Astrocyte of the cerebellum (primary cell): ENCODE measurements at regions of chr7 and their contacts with region 1.

Region 1: GRCh38 chr7:94405506-94405905 is 10.8 kb downstream of the COL1A2 start:
- DNase-seq: no peak
- H3K4me3 ChIP-seq: no peak overlapping the region
- CTCF ChIP-seq: no peak

Region 2: GRCh38 chr7:93958216-93958615 is 447.3 kb before region 1 on chr7:
- in situ Hi-C with region 1: no loop called
- DNase-seq: no peak
- H3K4me3 ChIP-seq: no peak overlapping the region
- CTCF ChIP-seq: no peak

Region 3: GRCh38 chr7:94289071-94289470 is 116.4 kb before region 1 on chr7:
- in situ Hi-C with region 1: loop called (anchors 5 kb)
- DNase-seq: peak; percentile 87
- H3K4me3 ChIP-seq: no peak overlapping the region
- CTCF ChIP-seq: peak; percentile 100

Region 4: DNA sequence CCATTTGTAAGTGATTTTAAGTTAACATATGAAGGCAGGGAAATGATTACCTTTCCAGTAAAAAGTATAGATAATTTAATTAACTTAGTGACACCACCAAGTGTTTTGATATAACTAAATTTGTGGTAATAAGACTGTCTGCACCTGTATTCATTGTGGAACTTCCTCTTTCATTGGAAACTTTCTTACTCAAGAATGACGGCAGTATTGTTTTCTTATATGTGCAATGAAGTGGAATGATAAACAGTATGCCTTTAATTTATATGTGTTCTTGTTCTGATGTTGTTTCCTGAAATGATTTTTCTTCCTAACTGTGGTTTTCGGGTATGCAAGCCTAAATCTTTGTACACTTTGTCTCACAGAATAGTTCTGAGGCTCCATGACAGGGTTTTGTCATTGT is 150.5 kb after region 1 on chr7:
- in situ Hi-C with region 1: no loop called
- DNase-seq: no peak
- H3K4me3 ChIP-seq: no peak overlapping the region
- CTCF ChIP-seq: no peak